AG04450 (cell line): ENCODE measurements at regions of chr6 and their contacts with region 1.

Region 1: GRCh38 chr6:30219244-30219643 is 6.0 kb upstream of the TRIM26 start:
- DNase-seq: no peak
- H3K4me3 ChIP-seq: no peak overlapping the region
- H3K27ac ChIP-seq: no peak overlapping the region
- H3K27me3 ChIP-seq: peaks cover 2% of the 10 kb centered on the region
- CTCF ChIP-seq: peak; percentile 95

Region 2: GRCh38 chr6:30066577-30067459 is 152.4 kb before region 1 on chr6 and contains the start of gene PPP1R11:
- CTCF ChIA-PET with region 1: no interaction called
- POLR2A ChIA-PET with region 1: no interaction called
- DNase-seq: peak; percentile 97
- H3K4me3 ChIP-seq: peak within 1 kb of the TSS; percentile 84
- H3K27ac ChIP-seq: peak within 1 kb of the TSS; percentile 80
- H3K27me3 ChIP-seq: peaks cover 8% of the 10 kb centered on the region
- CTCF ChIP-seq: no peak
- polyA plus RNA-seq, gene PPP1R11: 49.8 and 53.5 TPM in 2 replicates

Region 3: DNA sequence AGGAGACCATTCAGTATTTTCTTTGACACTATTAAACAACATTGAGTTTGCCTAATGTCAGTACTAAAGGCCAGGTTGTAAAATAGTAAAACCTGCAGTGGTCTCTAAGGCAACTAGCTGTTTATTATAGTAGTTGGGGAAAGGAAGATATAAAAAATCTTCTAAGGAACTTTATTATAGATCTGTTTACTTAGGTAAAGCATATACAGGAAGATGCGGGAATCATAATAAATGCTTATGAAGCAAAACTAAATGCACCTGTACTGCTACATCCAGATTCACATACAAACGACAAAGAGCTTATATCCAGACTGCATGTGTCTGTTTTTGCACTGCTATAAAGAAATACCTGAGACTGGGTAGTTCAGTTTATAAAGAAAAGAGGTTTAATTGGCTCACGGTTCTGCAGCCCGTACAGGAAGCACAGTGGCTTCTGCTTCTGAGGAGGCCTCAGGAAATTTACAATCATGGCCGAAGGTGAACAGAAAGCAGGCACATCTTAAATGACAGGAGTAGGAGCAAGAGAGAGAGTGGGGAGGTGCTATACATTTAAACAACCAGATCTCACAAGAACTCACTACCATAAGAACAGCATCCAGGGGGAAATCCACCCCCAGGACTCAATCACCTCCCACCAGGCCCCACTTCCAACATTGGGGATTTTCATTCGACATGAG is 98.8 kb after region 1 on chr6:
- CTCF ChIA-PET with region 1: interaction called, 10 read pairs
- POLR2A ChIA-PET with region 1: no interaction called
- DNase-seq: no peak
- H3K4me3 ChIP-seq: no peak overlapping the region
- H3K27ac ChIP-seq: no peak overlapping the region
- H3K27me3 ChIP-seq: no peaks in the 10 kb centered on the region
- CTCF ChIP-seq: no peak